Panc1 (cell line): ENCODE measurements at regions of chr5 and their contacts with region 1.

Region 1: DNA sequence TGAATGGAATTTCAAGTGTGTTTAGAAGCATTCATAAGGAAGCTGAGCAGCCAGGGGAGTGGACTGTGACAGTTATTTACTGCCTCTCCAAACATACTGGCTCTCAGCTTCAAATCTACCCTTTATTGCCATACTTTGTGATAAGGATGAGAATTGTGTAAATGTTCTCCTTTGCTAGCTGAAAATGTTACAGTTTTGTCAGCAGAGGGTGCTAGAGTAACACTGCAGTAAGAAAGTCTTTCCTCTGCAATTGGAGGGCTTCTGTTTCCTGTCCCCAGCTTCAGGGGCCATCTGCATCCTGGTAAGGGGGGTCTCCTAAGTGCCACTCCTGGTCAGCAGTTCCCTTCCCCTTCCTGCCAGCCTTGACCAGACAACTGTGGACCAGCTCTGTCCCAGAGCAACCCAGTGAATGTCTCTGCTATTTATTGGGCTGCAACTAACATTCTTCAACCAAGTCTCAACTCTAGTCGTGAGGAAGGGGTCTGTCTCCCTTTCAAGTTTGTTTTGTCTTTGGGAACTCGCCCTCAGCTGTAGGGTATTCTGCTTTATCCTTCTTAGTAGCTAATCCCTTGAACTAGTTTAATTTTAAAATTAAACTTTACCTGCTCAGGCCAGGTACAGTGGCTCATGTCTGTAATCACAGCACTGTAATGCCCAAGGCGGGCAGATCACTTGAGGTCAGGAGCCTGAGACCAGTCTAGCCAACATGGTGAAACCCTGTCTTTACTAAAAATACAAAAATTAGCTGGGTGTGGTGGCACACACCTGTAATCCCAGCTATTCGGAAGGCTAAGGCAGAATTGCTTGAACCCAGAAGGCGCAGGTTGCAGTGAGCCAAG is 45.3 kb downstream of the RAPGEF6 start:
- DNase-seq: no peak
- ATAC-seq: peak; percentile 87
- H3K4me3 ChIP-seq: no peak overlapping the region
- H3K27ac ChIP-seq: no peak overlapping the region
- H3K4me1 ChIP-seq: no peaks in the 10 kb centered on the region
- H3K27me3 ChIP-seq: no peaks in the 10 kb centered on the region
- CTCF ChIP-seq: peak; percentile 93

Region 2: GRCh38 chr5:131441184-131441583 is 148.5 kb before region 1 on chr5:
- CTCF ChIA-PET with region 1: no interaction called
- POLR2A ChIA-PET with region 1: interaction called, 10 read pairs
- in situ Hi-C with region 1: no loop called
- intact Hi-C with region 1: no loop called
- DNase-seq: no peak
- ATAC-seq: no peak
- H3K4me3 ChIP-seq: no peak overlapping the region
- H3K27ac ChIP-seq: no peak overlapping the region
- H3K4me1 ChIP-seq: no peaks in the 10 kb centered on the region
- H3K27me3 ChIP-seq: no peaks in the 10 kb centered on the region
- CTCF ChIP-seq: no peak